HEK293T (cell line): ENCODE measurements at regions of chr1 and their contacts with region 1.

Region 1: GRCh38 chr1:235971571-235972310 is 93.1 kb downstream of the NID1 start:
- DNase-seq: peak; percentile 91

Region 2: GRCh38 chr1:235783148-235783776 is 188.5 kb before region 1 on chr1:
- CTCF ChIA-PET with region 1: interaction called, 12 read pairs
- POLR2A ChIA-PET with region 1: interaction called, 6 read pairs
- DNase-seq: peak; percentile 26

Region 3: GRCh38 chr1:235866913-235867845 is 104.6 kb before region 1 on chr1:
- CTCF ChIA-PET with region 1: interaction called, 15 read pairs
- POLR2A ChIA-PET with region 1: interaction called, 24 read pairs
- DNase-seq: peak; percentile 100

Region 4: GRCh38 chr1:235940285-235940684 is 31.5 kb before region 1 on chr1:
- CTCF ChIA-PET with region 1: no interaction called
- POLR2A ChIA-PET with region 1: no interaction called
- DNase-seq: no peak

Region 5: DNA sequence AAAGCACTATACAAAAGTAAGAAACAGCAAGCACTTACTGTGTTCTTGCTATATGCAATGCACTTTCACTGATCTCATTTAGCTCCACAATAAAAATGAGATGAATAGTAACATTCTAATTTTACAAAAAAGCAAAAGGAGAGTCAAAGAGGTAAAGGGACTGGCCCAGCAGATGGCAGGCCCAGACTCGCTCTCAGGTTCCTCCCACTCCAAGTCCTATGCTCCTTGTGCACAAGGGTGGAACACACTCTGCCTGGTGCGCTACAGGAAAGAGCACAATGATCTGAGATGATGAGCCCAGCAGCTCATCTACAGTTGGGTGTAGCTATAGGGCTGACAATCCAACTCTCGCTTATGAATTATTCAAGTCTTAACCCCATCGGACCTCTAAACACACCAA is 10.9 kb before region 1 on chr1:
- CTCF ChIA-PET with region 1: interaction called, 27 read pairs
- POLR2A ChIA-PET with region 1: interaction called, 4 read pairs
- DNase-seq: no peak